ENCODE measurements at regions of chr5 and their contacts with region 1.

Region 1: GRCh38 chr5:1641560-1642166 is 117.9 kb upstream of the LPCAT1 start:
- DNase-seq: peak; percentile 89
- H3K4me3 Mint-ChIP-seq: no peak overlapping the region
- H3K27ac Mint-ChIP-seq: no peak overlapping the region
- H3K4me1 Mint-ChIP-seq: peaks cover 8% of the 10 kb centered on the region
- H3K27me3 Mint-ChIP-seq: peaks cover 27% of the 10 kb centered on the region

Region 2: GRCh38 chr5:923281-923873 is 718.3 kb before region 1 on chr5:
- CTCF ChIA-PET with region 1: no interaction called
- POLR2A ChIA-PET with region 1: no interaction called
- intact Hi-C with region 1: loop called (anchors 10 kb)
- DNase-seq: peak; percentile 77
- H3K4me3 Mint-ChIP-seq: no peak overlapping the region
- H3K27ac Mint-ChIP-seq: no peak overlapping the region
- H3K4me1 Mint-ChIP-seq: peaks cover 25% of the 10 kb centered on the region
- H3K27me3 Mint-ChIP-seq: peaks cover 24% of the 10 kb centered on the region

Region 3: GRCh38 chr5:1167728-1168709 is 473.6 kb before region 1 on chr5:
- CTCF ChIA-PET with region 1: interaction called, 35 read pairs
- POLR2A ChIA-PET with region 1: no interaction called
- intact Hi-C with region 1: loop called (anchors 1 kb)
- DNase-seq: peak; percentile 69
- H3K4me3 Mint-ChIP-seq: no peak overlapping the region
- H3K27ac Mint-ChIP-seq: no peak overlapping the region
- H3K4me1 Mint-ChIP-seq: peaks cover 8% of the 10 kb centered on the region
- H3K27me3 Mint-ChIP-seq: peaks cover 11% of the 10 kb centered on the region

Region 4: DNA sequence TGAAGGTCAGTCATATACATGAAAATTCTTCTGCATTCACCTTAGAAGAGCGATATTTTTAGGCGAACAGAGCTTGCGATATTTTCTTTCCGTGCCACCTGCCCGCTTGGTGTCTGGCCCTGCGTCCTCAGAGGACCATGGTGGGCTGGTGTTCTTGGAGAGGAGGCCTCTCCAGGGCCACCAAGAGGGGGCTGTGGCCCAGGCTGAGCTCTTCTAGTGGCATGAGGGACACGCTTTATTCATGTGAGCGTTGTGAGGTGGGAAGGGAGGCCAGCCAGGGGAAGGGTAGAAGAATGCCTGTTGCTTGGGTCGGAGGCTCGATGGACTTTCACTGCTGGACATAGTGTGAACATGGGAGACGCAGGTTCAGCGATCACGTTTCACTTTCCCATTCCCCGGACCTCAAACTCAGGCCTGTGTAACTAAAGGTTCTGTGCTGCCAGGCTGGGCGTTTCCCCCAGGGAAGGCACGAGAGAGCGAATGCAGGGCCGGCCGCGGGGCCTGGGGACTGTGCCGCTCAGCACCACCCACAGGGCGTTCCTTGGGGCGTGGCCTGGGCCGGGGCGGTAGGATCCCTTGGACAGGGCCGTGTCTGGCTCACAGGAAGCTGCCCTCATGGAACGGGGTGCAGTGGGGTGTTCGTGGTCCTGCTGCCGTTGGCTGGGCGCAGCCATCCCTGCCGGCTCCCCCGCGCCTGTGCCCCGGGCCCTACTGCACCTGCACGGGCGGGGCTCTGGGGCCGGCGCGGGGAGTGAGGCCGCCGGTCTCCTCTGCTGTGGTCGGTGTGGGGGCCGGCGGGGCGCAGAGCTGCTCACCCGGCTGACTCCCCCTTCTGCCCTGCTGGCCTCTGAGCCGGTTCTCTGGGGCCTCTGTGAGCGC is 256.0 kb before region 1 on chr5:
- CTCF ChIA-PET with region 1: interaction called, 38 read pairs
- POLR2A ChIA-PET with region 1: no interaction called
- intact Hi-C with region 1: loop called (anchors 2 kb)
- DNase-seq: peak; percentile 89
- H3K4me3 Mint-ChIP-seq: peak overlapping the region; percentile 92
- H3K27ac Mint-ChIP-seq: peak overlapping the region; percentile 92
- H3K4me1 Mint-ChIP-seq: peaks cover 23% of the 10 kb centered on the region
- H3K27me3 Mint-ChIP-seq: no peaks in the 10 kb centered on the region

Region 5: DNA sequence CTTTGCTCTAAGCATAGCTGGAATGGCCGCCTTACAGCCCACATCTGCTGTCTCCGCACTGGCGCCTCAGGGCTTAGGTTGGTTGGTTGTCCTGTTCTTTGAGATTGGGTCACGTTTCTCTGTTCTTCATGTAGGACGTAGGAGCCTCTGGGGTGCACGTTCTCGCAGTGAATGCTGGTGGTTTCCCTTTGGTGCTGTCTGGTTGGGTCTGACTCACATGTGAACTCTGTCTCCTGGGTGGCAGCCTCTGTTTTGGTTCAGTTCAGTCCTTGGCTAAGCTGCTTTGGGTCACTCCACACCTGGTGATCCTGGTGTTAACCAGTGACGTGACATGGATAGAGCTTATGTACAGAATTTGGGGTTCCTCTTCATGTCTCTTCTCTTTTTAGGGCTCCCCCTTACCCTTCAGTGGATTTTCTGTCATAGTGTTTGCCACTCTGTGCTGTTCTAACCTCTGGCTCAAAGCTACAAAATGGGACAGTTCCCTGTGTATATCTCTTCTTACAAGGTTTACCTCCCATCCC is 105.3 kb before region 1 on chr5:
- CTCF ChIA-PET with region 1: interaction called, 5 read pairs
- POLR2A ChIA-PET with region 1: no interaction called
- intact Hi-C with region 1: loop called (anchors 2 kb)
- DNase-seq: peak; percentile 86
- H3K4me3 Mint-ChIP-seq: peak overlapping the region; percentile 71
- H3K27ac Mint-ChIP-seq: peak overlapping the region; percentile 78
- H3K4me1 Mint-ChIP-seq: peaks cover 21% of the 10 kb centered on the region
- H3K27me3 Mint-ChIP-seq: no peaks in the 10 kb centered on the region

Region 6: DNA sequence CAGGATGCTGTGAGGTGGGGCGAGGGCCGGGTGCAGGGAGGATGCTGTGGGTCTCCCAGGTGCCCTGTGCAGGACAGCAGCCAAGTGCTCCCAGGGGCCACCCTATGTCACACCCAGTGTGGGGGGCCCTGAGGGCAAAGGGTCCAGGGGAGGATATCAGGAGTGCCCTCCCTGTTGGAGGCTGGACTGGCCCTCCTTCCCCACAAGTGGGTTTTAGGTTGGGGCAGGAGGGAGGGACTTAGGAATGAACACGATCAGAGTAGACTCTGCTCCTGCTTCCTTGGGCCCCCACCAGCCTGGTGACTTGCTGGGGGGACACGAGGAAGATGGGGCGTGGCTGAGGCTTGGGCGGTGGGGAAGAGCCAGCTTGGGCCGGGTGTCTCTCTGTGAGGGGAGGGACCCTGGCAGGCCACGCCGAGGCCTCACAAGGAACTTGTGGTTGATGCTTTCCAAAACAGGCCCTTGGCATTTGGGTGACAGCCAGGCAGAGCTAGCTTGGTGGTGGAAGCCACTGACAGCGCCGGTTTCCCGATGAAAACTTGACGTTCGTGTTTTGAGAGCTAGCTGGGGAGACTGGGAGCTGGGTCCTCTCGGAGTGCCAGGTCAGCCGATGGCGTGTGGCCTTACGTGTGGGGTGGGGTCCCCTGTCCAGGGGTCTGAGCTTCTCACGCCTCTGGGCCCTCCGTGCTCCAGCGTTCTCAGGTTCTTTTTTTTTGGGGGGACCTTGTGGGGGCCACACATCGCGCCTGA is 11.1 kb after region 1 on chr5:
- CTCF ChIA-PET with region 1: interaction called, 20 read pairs
- POLR2A ChIA-PET with region 1: no interaction called
- intact Hi-C with region 1: no loop called
- DNase-seq: peak; percentile 6
- H3K4me3 Mint-ChIP-seq: no peak overlapping the region
- H3K27ac Mint-ChIP-seq: no peak overlapping the region
- H3K4me1 Mint-ChIP-seq: peaks cover 3% of the 10 kb centered on the region
- H3K27me3 Mint-ChIP-seq: peaks cover 31% of the 10 kb centered on the region

Region 7: GRCh38 chr5:1673042-1673677 is 31.5 kb after region 1 on chr5:
- CTCF ChIA-PET with region 1: no interaction called
- POLR2A ChIA-PET with region 1: no interaction called
- intact Hi-C with region 1: no loop called
- DNase-seq: no peak
- H3K4me3 Mint-ChIP-seq: no peak overlapping the region
- H3K27ac Mint-ChIP-seq: no peak overlapping the region
- H3K4me1 Mint-ChIP-seq: no peaks in the 10 kb centered on the region
- H3K27me3 Mint-ChIP-seq: peaks cover 41% of the 10 kb centered on the region

Region 8: DNA sequence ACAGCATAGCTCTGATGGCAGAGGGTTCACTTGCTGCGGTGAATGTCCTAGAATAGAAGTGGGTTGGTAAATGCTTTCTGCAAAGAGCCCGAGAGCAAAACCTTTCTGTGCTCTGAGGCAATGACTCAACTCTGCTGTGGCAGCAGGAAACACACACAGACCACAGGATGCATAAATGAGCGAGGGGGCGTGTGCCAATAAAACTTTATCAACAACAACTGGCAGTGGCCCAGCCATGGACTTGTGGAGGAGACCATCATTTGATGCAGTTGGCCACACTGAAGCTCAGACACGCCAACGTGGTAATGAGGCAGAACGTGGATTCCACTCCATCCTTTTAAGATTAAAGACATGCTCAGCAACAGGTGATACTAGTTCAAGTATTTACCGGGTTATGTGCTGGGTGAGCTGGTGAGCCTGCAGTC is 151.2 kb after region 1 on chr5:
- CTCF ChIA-PET with region 1: no interaction called
- POLR2A ChIA-PET with region 1: no interaction called
- intact Hi-C with region 1: no loop called
- DNase-seq: peak; percentile 92
- H3K4me3 Mint-ChIP-seq: peak overlapping the region; percentile 83
- H3K27ac Mint-ChIP-seq: peak overlapping the region; percentile 99
- H3K4me1 Mint-ChIP-seq: peaks cover 77% of the 10 kb centered on the region
- H3K27me3 Mint-ChIP-seq: peaks cover 2% of the 10 kb centered on the region